ENCODE measurements at regions of chr9 and their contacts with region 1.

Region 1: GRCh38 chr9:89602978-89603766 is 1.6 kb upstream of the GADD45G start:
- DNase-seq: peak; percentile 86
- H3K4me3 Mint-ChIP-seq: peak overlapping the region; percentile 79
- H3K27ac Mint-ChIP-seq: no peak overlapping the region
- H3K4me1 Mint-ChIP-seq: peaks cover 10% of the 10 kb centered on the region
- H3K27me3 Mint-ChIP-seq: peaks cover 26% of the 10 kb centered on the region
- CTCF ChIP-seq: peak; percentile 94

Region 2: DNA sequence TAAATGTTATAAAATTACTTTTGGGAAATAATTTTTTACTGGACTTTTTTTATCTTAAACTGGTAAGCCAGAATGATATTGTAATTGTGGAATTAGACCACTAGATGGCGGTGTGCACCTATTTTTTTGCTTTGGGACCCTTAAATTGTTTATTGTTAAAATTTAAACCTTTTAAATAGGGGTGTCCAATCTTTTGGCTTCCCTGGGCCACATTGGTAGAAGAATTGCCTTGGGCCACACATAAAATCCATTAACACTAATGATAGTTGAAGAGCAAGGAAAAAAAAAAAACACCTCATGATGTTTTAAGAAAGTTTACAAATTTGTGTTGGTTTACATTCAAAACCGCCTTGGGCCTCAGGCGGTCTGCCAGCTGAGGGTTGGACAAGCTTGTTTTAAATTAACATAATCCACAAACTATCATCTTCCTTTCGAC is 26.8 kb before region 1 on chr9:
- CTCF ChIA-PET with region 1: interaction called, 17 read pairs
- POLR2A ChIA-PET with region 1: no interaction called
- intact Hi-C with region 1: no loop called
- DNase-seq: peak; percentile 56
- H3K4me3 Mint-ChIP-seq: no peak overlapping the region
- H3K27ac Mint-ChIP-seq: no peak overlapping the region
- H3K4me1 Mint-ChIP-seq: no peaks in the 10 kb centered on the region
- H3K27me3 Mint-ChIP-seq: peaks cover 89% of the 10 kb centered on the region
- CTCF ChIP-seq: peak; percentile 74

Region 3: DNA sequence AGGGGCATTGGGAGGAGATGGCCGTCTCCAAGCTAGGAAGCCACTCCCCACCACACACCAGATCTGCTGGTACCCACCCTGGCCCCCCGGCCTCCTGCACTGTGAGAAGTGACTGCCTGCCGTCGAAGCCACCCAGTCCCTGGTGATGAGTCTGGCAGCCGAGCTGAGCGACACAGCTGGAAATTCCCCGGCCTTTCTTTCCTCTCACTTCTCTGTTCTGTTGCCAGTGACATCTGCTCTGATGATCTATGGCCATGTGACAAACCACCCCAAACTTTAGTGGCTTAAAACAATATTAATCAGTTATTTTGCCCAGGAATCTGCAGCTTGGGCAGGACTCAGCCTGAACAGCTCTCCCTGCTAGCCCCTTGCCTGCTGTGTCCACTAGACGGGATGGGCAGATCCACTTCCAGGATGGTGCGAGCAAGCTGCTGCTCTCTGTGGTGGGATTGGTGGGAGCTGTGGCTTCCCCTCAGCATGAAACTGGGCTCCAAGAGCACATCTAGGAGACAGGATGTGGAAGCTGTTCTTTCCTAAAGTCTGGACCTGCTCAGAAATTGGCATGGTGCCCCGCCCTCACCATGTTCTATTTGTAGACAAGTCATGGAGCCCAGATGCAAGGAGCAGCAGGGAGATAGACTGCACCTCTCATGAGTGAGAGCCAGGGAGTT is 212.9 kb after region 1 on chr9:
- CTCF ChIA-PET with region 1: no interaction called
- POLR2A ChIA-PET with region 1: interaction called, 3 read pairs
- intact Hi-C with region 1: loop called (anchors 10 kb)
- DNase-seq: no peak
- H3K4me3 Mint-ChIP-seq: no peak overlapping the region
- H3K27ac Mint-ChIP-seq: no peak overlapping the region
- H3K4me1 Mint-ChIP-seq: no peaks in the 10 kb centered on the region
- H3K27me3 Mint-ChIP-seq: peaks cover 38% of the 10 kb centered on the region
- CTCF ChIP-seq: no peak

Region 4: GRCh38 chr9:89919169-89919681 is 316.1 kb after region 1 on chr9:
- CTCF ChIA-PET with region 1: interaction called, 3 read pairs
- POLR2A ChIA-PET with region 1: interaction called, 3 read pairs
- intact Hi-C with region 1: loop called (anchors 1 kb)
- DNase-seq: peak; percentile 43
- H3K4me3 Mint-ChIP-seq: no peak overlapping the region
- H3K27ac Mint-ChIP-seq: no peak overlapping the region
- H3K4me1 Mint-ChIP-seq: peaks cover 5% of the 10 kb centered on the region
- H3K27me3 Mint-ChIP-seq: peaks cover 11% of the 10 kb centered on the region
- CTCF ChIP-seq: no peak

Region 5: DNA sequence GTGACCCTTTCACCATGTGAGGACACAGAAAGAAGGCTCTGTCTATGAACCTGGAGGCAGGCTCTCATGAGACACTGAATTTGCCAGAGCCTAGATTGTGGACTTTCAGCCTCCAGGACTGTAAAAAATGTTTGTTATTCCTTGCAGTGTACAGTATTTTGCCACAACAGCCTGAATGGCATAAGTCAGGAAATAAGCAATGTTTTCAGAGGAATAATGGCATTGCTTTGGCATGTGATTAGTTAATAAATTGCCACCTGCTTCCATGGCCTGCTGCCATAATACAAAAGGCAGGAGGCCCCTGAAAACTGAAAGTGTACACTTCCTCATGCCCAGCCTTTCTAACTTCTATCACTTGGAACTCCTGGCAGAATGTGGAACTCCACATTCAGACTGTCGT is 409.8 kb after region 1 on chr9:
- CTCF ChIA-PET with region 1: interaction called, 10 read pairs
- POLR2A ChIA-PET with region 1: no interaction called
- intact Hi-C with region 1: no loop called
- DNase-seq: no peak
- H3K4me3 Mint-ChIP-seq: no peak overlapping the region
- H3K27ac Mint-ChIP-seq: no peak overlapping the region
- H3K4me1 Mint-ChIP-seq: peaks cover 19% of the 10 kb centered on the region
- H3K27me3 Mint-ChIP-seq: no peaks in the 10 kb centered on the region
- CTCF ChIP-seq: no peak

Region 6: DNA sequence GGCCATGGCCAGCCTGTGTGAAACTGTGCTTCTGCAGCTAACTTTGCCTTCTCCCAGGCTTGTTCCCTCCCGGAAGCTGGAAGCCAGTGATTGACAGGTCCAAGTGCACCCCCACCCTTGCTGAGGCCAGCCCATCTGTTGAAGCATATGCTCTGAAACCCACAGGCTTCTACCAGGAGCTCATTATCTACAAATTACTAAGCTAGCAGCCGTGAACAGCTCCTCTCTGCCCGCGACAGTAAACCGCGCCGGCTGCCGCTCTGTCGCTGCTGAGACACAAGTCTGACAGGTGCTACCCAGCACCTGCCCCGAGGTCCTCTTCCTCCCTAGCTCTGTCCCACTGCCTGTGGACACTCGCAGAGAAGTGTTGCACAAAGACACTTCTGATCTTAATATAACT is 492.5 kb after region 1 on chr9:
- CTCF ChIA-PET with region 1: interaction called, 382 read pairs
- POLR2A ChIA-PET with region 1: interaction called, 8 read pairs
- intact Hi-C with region 1: no loop called
- DNase-seq: no peak
- H3K4me3 Mint-ChIP-seq: no peak overlapping the region
- H3K27ac Mint-ChIP-seq: no peak overlapping the region
- H3K4me1 Mint-ChIP-seq: no peaks in the 10 kb centered on the region
- H3K27me3 Mint-ChIP-seq: peaks cover 22% of the 10 kb centered on the region
- CTCF ChIP-seq: no peak

Region 7: GRCh38 chr9:90142580-90142979 is 539.4 kb after region 1 on chr9:
- CTCF ChIA-PET with region 1: interaction called, 24 read pairs
- POLR2A ChIA-PET with region 1: no interaction called
- intact Hi-C with region 1: no loop called
- DNase-seq: peak; percentile 59
- H3K4me3 Mint-ChIP-seq: no peak overlapping the region
- H3K27ac Mint-ChIP-seq: no peak overlapping the region
- H3K4me1 Mint-ChIP-seq: no peaks in the 10 kb centered on the region
- H3K27me3 Mint-ChIP-seq: peaks cover 79% of the 10 kb centered on the region
- CTCF ChIP-seq: peak; percentile 35

Region 8: DNA sequence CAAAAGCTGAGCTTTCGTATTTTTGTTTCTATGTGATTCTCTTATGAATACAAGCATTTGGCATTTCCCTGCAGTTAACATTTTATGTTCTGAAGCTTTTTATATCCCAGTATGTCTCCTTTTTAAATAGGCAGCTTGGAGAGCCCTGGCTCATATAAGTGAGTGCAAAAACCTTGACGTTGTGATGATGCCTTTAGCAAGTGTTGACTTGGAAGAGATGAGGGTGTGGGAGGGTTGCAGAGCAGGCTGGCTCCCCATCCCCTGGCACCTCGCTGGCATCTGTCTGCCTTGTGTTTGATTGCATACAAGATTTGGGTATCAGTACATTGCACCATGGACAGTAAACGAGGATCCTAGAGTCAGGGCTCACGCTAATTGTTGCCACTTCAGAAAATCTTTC is 1081.6 kb after region 1 on chr9:
- CTCF ChIA-PET with region 1: no interaction called
- POLR2A ChIA-PET with region 1: no interaction called
- intact Hi-C with region 1: no loop called
- DNase-seq: no peak
- H3K4me3 Mint-ChIP-seq: no peak overlapping the region
- H3K27ac Mint-ChIP-seq: no peak overlapping the region
- H3K4me1 Mint-ChIP-seq: no peaks in the 10 kb centered on the region
- H3K27me3 Mint-ChIP-seq: peaks cover 73% of the 10 kb centered on the region
- CTCF ChIP-seq: no peak

Measured in MCF 10A (cell line).